ENCODE measurements at regions of chr6 and their contacts with region 1.

Region 1: DNA sequence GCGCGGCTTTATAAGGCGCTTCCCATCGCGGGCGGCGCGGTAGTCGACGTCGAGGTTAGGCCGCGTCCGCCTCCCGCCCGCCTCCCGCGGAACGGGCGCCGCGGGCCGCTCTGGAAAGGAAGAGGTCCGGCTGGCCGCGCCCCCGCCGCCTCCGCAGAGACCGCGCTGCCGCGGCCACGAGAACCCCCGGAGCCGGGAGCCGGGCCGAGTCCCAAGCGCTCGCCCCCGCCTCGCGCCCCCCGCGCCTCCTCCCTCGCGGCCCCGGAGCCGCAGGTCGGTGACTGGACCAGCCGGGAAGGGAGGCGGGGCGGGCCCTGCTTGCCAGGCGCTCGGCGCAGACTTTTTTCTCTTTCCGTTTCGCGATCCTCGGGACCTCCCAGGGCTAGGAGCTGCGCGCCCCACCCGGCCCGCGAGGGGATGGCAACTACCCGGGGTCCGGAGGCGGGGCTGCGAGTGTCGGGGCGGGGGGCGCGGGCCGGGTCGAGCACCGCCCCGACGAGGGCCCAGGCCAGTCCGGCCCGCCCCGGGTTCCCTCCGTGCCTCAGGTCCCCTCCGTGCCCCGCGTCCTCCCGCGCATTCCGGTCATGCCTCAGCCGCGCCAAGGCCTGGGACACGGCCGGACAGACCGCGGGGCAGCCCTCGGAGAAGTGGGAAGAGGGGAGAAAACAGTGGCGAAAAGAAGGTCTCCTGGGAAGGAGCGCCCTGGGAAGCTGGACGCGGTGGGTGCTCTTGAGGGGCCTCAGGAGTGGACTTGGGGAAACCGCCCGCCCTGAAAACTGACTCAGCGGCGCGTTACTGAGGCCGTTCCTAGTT is 423 bp upstream of the PXDC1 start:
- DNase-seq: peak; percentile 67
- H3K4me3 Mint-ChIP-seq: peak overlapping the region; percentile 81
- H3K27ac Mint-ChIP-seq: no peak overlapping the region
- H3K4me1 Mint-ChIP-seq: peaks cover 27% of the 10 kb centered on the region
- H3K27me3 Mint-ChIP-seq: no peaks in the 10 kb centered on the region
- CTCF ChIP-seq: peak; percentile 24

Region 2: GRCh38 chr6:3372007-3372846 is 379.7 kb before region 1 on chr6:
- CTCF ChIA-PET with region 1: no interaction called
- POLR2A ChIA-PET with region 1: no interaction called
- intact Hi-C with region 1: no loop called
- DNase-seq: no peak
- H3K4me3 Mint-ChIP-seq: no peak overlapping the region
- H3K27ac Mint-ChIP-seq: no peak overlapping the region
- H3K4me1 Mint-ChIP-seq: peaks cover 8% of the 10 kb centered on the region
- H3K27me3 Mint-ChIP-seq: no peaks in the 10 kb centered on the region
- CTCF ChIP-seq: no peak

Region 3: DNA sequence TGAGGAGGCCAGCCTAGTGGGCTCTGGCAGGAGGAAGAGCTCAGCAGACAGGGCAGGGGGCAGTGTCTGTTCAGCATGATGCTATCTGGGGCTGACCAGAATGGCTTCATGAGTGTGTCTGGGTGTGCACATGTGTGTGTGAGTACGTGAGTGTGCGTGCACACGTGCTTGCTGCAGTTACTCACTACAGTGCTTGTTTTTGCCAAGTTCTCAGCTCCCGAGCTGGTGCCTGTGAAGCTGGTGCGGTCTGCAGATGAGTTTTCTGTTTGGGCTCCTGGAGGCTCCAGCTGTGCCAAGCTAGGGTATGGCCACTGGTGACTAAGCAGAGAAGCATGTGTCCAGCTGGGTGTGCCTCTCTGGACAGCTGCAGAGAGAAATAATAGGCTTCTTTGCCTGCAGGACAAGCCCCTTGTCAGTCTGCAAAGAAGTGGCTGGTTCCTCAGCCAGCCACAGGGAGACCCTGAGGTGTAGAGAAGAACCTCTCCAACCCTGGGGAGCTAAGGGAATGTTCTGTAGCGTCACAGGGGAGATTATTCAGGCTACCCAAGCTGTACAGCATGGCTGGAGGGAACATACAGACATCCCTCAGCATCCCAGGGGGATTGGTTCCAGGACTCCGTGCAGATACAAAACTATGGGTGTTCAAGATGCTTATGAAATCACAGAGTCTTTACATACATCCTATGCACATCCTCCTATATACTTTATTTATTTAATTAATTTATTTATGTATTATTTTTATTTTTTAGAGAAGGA is 57.0 kb after region 1 on chr6:
- CTCF ChIA-PET with region 1: interaction called, 5 read pairs
- POLR2A ChIA-PET with region 1: interaction called, 22 read pairs
- intact Hi-C with region 1: loop called (anchors 1 kb)
- DNase-seq: peak; percentile 90
- H3K4me3 Mint-ChIP-seq: peak overlapping the region; percentile 36
- H3K27ac Mint-ChIP-seq: peak overlapping the region; percentile 89
- H3K4me1 Mint-ChIP-seq: peaks cover 38% of the 10 kb centered on the region
- H3K27me3 Mint-ChIP-seq: no peaks in the 10 kb centered on the region
- CTCF ChIP-seq: no peak

Region 4: GRCh38 chr6:3887150-3887700 is 135.3 kb after region 1 on chr6:
- CTCF ChIA-PET with region 1: interaction called, 21 read pairs
- POLR2A ChIA-PET with region 1: no interaction called
- intact Hi-C with region 1: loop called (anchors 1 kb)
- DNase-seq: no peak
- H3K4me3 Mint-ChIP-seq: no peak overlapping the region
- H3K27ac Mint-ChIP-seq: no peak overlapping the region
- H3K4me1 Mint-ChIP-seq: peaks cover 10% of the 10 kb centered on the region
- H3K27me3 Mint-ChIP-seq: no peaks in the 10 kb centered on the region
- CTCF ChIP-seq: peak; percentile 20

Region 5: GRCh38 chr6:3919130-3919628 is 167.2 kb after region 1 on chr6:
- CTCF ChIA-PET with region 1: interaction called, 16 read pairs
- POLR2A ChIA-PET with region 1: interaction called, 13 read pairs
- intact Hi-C with region 1: no loop called
- DNase-seq: peak; percentile 85
- H3K4me3 Mint-ChIP-seq: no peak overlapping the region
- H3K27ac Mint-ChIP-seq: peak overlapping the region; percentile 84
- H3K4me1 Mint-ChIP-seq: peaks cover 21% of the 10 kb centered on the region
- H3K27me3 Mint-ChIP-seq: no peaks in the 10 kb centered on the region
- CTCF ChIP-seq: no peak

Region 6: DNA sequence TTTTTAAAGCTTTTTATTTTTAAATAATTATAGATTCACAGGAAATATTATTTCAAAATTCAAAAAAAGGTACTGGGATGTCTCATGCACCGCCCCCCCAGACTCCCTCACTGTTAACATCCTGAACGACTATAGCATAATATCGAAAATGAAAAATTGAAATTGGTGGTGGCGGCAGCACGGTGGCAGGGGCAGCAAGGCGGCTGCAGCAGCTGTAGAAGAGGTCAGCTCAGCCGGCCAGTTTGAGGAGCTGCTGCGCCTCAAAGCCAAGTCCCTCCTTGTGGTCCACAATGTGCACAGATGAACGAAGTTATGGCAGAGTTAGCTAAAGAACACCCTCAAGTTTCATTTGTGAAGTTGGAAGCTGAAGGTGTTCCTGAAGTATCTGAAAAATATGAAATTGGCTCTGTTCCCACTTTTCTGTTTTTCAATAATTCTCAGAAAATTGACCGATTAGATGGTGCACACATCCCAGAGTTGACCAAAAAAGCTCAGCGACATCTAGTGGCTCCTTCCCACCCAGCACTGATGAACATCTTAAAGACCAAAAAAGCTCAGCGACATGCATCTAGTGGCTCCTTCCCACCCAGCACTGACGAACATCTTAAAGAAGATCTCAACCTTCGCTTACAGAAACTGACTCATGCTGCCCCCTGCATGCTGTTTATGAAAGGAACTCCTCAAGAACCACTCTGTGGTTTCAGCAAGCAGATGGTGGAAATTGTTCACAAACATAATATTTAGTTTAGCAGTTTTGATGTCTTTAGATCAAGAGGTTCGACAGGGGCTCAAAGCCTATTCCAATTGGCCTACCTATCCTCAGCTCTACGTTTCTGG is 226.2 kb after region 1 on chr6:
- CTCF ChIA-PET with region 1: interaction called, 14 read pairs
- POLR2A ChIA-PET with region 1: interaction called, 4 read pairs
- intact Hi-C with region 1: no loop called
- DNase-seq: peak; percentile 69
- H3K4me3 Mint-ChIP-seq: no peak overlapping the region
- H3K27ac Mint-ChIP-seq: no peak overlapping the region
- H3K4me1 Mint-ChIP-seq: no peaks in the 10 kb centered on the region
- H3K27me3 Mint-ChIP-seq: no peaks in the 10 kb centered on the region
- CTCF ChIP-seq: peak; percentile 43

Region 7: GRCh38 chr6:3997177-3997770 is 245.3 kb after region 1 on chr6:
- CTCF ChIA-PET with region 1: interaction called, 10 read pairs
- POLR2A ChIA-PET with region 1: no interaction called
- intact Hi-C with region 1: no loop called
- DNase-seq: no peak
- H3K4me3 Mint-ChIP-seq: no peak overlapping the region
- H3K27ac Mint-ChIP-seq: no peak overlapping the region
- H3K4me1 Mint-ChIP-seq: peaks cover 19% of the 10 kb centered on the region
- H3K27me3 Mint-ChIP-seq: no peaks in the 10 kb centered on the region
- CTCF ChIP-seq: no peak

Region 8: GRCh38 chr6:4018172-4018905 is 266.4 kb after region 1 on chr6:
- CTCF ChIA-PET with region 1: interaction called, 5 read pairs
- POLR2A ChIA-PET with region 1: interaction called, 17 read pairs
- intact Hi-C with region 1: no loop called
- DNase-seq: peak; percentile 97
- H3K4me3 Mint-ChIP-seq: peak overlapping the region; percentile 96
- H3K27ac Mint-ChIP-seq: peak overlapping the region; percentile 97
- H3K4me1 Mint-ChIP-seq: peaks cover 42% of the 10 kb centered on the region
- H3K27me3 Mint-ChIP-seq: no peaks in the 10 kb centered on the region
- CTCF ChIP-seq: peak; percentile 39

Measured in MCF 10A (cell line).